IMR-90 (cell line): ENCODE measurements at regions of chrX and their contacts with region 1.

Region 1: DNA sequence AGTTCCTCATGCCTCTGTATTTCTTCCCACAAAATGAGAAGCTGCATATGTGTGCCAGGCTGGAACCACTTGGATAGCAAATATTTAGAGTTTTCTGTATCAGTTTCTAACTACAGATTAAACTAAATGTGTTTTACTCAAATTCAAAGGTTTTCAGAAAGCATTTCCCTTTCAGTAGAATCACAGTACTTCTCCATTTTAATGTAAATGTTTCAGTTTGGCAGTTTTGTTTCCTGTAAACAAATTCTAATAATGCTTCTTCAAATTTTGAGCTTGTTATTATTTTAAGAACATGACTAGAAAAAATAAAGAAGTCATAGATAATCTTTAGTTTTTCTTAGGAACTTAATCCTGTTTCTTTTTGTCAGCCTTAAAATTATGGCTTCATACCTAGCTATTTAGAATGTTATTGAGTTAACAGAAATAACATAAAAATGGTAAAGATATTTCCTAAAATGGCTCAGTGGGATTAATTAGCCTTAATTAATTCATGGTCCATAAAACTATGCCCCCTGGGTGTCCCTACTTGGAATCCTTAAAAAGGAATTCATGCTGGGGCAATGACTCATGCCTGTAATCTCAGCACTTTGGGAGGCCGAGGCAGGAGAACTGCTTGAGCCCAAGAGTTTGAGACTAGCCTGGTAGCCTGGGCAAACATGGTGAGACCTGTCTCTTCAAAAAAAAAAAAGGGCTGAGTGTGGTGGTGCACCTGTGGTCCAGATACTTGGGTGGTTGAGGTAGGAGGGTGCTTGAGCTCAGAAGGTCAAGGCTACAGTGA is 83.8 kb upstream of the GPR34 start:
- DNase-seq: no peak
- ATAC-seq: no peak
- H3K4me3 ChIP-seq: no peak overlapping the region
- H3K27ac ChIP-seq: no peak overlapping the region
- H3K4me1 ChIP-seq: peaks cover 3% of the 10 kb centered on the region; the same call in 1 of the 2 replicates
- H3K27me3 ChIP-seq: no peaks in the 10 kb centered on the region
- CTCF ChIP-seq: no peak
- POLR2A ChIP-seq: no peak
- RAD21 ChIP-seq: no peak

Region 2: GRCh38 chrX:41333744-41334259 is 271.2 kb before region 1 on chrX and contains the start of gene DDX3X:
- CTCF ChIA-PET with region 1: no interaction called
- POLR2A ChIA-PET with region 1: interaction called, 10 read pairs
- dilution Hi-C with region 1: no loop called
- in situ Hi-C with region 1: no loop called
- intact Hi-C with region 1: no loop called
- DNase-seq: peak; percentile 91
- ATAC-seq: peak; percentile 72
- H3K4me3 ChIP-seq: peak within 1 kb of the TSS; percentile 68
- H3K27ac ChIP-seq: peak within 1 kb of the TSS; percentile 94
- H3K4me1 ChIP-seq: peaks cover 5% of the 10 kb centered on the region; the same call in 1 of the 2 replicates
- H3K27me3 ChIP-seq: no peaks in the 10 kb centered on the region
- CTCF ChIP-seq: peak; percentile 36
- POLR2A ChIP-seq: peak; percentile 100
- RAD21 ChIP-seq: no peak
- total RNA-seq, gene DDX3X: 229 and 448 TPM in 2 replicates